Sciatic nerve (tissue), 2 donors: ENCODE measurements at regions of chr14 and their contacts with region 1.

Region 1: GRCh38 chr14:105374383-105374782 is 24.0 kb upstream of the TEX22 start:
- DNase-seq: no peak
- ATAC-seq: no peak

Region 2: GRCh38 chr14:105489542-105490266 is 115.3 kb after region 1 on chr14:
- intact Hi-C with region 1: loop called (anchors 5 kb)
- DNase-seq: peak; percentile 91
- ATAC-seq: peak; percentile 30